Endothelial cell of umbilical vein (primary cell): ENCODE measurements at regions of chr3 and their contacts with region 1.

Region 1: DNA sequence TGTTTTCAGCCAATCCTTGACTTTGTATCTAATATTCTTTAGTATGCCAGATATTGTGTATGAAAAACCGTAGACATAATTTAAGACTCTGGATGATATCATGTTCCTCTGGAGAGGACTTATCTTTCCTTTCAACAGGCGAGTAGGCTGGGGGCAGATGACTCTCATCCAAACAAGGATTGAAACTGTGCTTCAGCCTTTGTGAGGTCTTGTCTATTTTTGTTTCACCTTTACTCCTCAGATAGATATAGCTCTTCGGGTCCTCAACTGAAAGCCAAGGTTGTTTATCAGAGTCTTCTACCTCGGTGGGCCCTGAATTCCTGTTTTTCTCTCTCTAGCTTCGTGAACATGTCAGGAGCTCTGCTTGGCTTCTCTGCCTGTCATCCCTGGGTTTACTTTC is 66.0 kb downstream of the C3orf20 start:
- DNase-seq: no peak
- H3K4me3 ChIP-seq: no peak overlapping the region
- H3K27ac ChIP-seq: no peak overlapping the region
- H3K4me1 ChIP-seq: no peaks in the 10 kb centered on the region
- H3K27me3 ChIP-seq: peaks cover 3 to 9% of the 10 kb centered on the region in 2 experiments
- CTCF ChIP-seq: no peak
- POLR2A ChIP-seq: no peak

Region 2: DNA sequence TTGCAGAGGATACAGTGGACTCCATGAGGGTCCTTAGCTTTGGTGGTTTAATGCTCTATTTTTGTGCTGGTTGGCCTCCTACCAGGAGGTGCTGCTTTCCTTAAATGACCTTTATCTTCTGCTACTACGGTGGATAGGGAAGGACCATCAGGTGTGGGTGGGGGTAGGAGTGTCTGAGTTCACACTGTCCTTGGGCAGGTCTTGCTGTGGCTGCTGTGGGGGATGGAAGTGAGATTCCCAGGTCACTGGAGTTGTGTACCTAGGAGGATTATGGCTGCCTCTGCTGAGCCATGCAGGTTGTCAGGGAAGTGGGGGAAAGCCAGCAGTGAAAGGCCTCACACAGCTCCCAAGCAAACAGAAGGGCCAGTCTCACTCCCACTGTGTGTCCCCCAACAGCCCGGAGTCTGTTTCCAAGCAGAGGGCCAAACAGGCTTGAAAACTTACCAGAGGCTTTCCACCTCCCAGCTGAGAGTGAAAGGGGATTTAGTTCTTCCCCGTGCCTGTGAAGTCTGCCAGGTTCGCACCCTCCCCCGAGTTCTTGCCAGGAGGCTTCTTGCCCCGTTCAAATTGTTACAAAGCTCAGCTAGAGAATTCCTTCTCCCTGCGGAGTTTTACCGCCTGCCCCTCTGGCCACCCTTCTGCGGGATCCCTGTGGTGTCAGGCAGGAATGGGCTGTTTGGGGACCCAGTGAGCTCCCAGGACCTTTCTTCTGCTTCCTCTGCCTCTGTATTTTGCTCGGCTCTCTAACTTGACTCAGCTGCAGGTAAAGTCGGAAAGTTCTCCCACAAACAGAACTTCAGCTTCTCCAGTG is 793.2 kb before region 1 on chr3:
- CTCF ChIA-PET with region 1: no interaction called
- POLR2A ChIA-PET with region 1: no interaction called
- dilution Hi-C with region 1: no loop called
- intact Hi-C with region 1: loop called (anchors 5 kb)
- DNase-seq: no peak
- H3K4me3 ChIP-seq: no peak overlapping the region
- H3K27ac ChIP-seq: no peak overlapping the region
- H3K4me1 ChIP-seq: no peaks in the 10 kb centered on the region
- H3K27me3 ChIP-seq: no peaks in the 10 kb centered on the region
- CTCF ChIP-seq: no peak
- POLR2A ChIP-seq: no peak

Region 3: GRCh38 chr3:14274999-14275961 is 465.7 kb before region 1 on chr3:
- CTCF ChIA-PET with region 1: no interaction called
- POLR2A ChIA-PET with region 1: no interaction called
- dilution Hi-C with region 1: no loop called
- intact Hi-C with region 1: no loop called
- DNase-seq: peak; percentile 11
- H3K4me3 ChIP-seq: no peak overlapping the region
- H3K27ac ChIP-seq: no peak overlapping the region
- H3K4me1 ChIP-seq: no peaks in the 10 kb centered on the region
- H3K27me3 ChIP-seq: no peaks in the 10 kb centered on the region
- CTCF ChIP-seq: peak; percentile 31 to 55
- POLR2A ChIP-seq: no peak

Region 4: DNA sequence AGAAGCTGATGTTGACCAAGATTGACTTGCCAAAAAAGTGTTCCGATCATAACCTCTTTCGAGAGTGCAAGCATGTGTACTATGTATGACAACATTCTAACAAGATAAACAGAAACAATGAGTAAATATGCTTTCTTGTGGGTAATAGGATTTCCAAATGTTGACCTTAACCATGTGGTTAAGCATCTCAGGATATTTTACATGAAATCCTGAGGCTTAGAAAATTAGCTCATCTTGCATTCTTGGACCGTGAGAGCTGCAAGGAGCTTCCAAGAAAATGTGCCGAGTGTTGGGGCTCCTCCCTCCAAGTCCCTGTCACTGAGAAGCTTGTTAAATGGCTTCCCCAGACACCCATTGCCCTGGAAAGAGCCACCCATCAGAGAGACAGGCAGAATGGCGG is 16.0 kb before region 1 on chr3:
- CTCF ChIA-PET with region 1: no interaction called
- POLR2A ChIA-PET with region 1: no interaction called
- dilution Hi-C with region 1: no loop called
- intact Hi-C with region 1: no loop called
- DNase-seq: no peak
- H3K4me3 ChIP-seq: no peak overlapping the region
- H3K27ac ChIP-seq: no peak overlapping the region
- H3K4me1 ChIP-seq: no peaks in the 10 kb centered on the region
- H3K27me3 ChIP-seq: peaks cover 2% of the 10 kb centered on the region in 2 experiments
- CTCF ChIP-seq: no peak
- POLR2A ChIP-seq: no peak

Region 5: DNA sequence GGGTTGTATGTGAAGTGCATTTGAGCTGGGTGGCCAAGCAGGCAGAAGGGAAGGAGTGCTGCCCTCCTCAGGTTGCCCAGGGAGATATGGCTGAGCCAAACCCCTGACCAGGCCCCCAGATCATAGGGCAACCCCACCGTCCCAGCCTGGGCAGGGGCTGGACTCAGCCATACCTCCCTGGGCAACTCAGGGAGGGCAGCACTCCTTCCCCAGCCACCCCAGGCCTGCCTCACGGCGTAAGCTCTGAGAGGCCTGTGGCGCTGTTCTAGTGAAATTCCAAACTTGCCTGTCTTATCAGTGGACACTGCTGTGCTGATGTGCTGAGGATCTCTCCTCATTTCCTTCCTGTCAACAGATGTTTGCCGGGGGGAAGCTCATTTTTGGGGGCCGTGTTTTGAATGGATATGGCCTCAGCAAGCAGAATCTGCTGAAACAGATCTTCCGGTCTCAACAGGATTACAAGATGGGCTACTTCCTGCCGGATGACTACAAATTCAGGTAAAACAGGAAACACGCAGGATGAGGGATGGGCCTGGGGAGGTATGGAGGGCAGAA is 20.2 kb after region 1 on chr3:
- CTCF ChIA-PET with region 1: no interaction called
- POLR2A ChIA-PET with region 1: no interaction called
- dilution Hi-C with region 1: no loop called
- intact Hi-C with region 1: no loop called
- DNase-seq: no peak
- H3K4me3 ChIP-seq: no peak overlapping the region
- H3K27ac ChIP-seq: no peak overlapping the region
- H3K4me1 ChIP-seq: no peaks in the 10 kb centered on the region
- H3K27me3 ChIP-seq: no peaks in the 10 kb centered on the region
- CTCF ChIP-seq: no peak
- POLR2A ChIP-seq: no peak